ENCODE measurements at regions of chr3 and their contacts with region 1.

Region 1: DNA sequence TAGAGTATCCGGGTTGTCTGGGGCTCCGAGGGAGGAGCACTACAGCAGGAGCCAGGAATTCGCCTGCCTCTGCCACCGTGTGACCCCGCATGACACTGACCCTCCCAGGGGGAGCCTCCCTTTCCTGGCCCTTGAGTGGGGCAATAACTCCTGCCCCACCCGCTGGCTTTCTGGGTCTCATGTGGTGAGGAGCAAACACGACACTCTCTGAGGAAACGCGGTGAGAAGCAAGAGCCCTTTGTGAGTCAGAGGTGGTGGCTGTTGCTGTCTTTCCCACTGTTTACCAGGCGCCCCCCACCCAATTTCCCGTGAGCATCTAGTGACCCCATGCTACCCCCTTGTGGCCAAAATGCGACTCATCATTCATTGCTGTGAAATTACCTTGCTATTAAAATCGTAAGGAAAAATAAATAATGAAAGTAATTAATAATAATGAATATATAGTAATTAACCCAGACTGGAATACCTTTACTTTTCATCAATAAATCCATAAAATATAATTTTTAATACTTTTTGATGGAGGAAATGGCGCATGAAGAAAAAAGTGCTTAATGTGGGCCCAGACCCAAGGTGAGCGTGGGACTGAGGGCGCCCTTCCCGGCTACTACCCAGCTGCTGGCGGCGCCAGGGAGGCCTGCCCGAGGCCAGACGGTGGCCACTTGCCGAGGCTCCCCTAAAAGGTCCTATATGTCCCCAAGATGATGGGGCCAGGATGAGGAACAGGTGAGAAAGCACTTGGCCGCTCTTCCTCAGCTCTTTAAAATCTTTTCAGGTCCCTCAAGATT is 29.3 kb downstream of the CCNL1 start:
- DNase-seq: peak; percentile 78 to 82 (median 81)
- ATAC-seq: peak; percentile 30 to 75
- H3K4me3 ChIP-seq: no peak overlapping the region
- H3K27ac ChIP-seq: peak overlapping the region; percentile 74
- H3K4me1 ChIP-seq: peaks cover 36% of the 10 kb centered on the region
- H3K27me3 ChIP-seq: no peaks in the 10 kb centered on the region

Region 2: DNA sequence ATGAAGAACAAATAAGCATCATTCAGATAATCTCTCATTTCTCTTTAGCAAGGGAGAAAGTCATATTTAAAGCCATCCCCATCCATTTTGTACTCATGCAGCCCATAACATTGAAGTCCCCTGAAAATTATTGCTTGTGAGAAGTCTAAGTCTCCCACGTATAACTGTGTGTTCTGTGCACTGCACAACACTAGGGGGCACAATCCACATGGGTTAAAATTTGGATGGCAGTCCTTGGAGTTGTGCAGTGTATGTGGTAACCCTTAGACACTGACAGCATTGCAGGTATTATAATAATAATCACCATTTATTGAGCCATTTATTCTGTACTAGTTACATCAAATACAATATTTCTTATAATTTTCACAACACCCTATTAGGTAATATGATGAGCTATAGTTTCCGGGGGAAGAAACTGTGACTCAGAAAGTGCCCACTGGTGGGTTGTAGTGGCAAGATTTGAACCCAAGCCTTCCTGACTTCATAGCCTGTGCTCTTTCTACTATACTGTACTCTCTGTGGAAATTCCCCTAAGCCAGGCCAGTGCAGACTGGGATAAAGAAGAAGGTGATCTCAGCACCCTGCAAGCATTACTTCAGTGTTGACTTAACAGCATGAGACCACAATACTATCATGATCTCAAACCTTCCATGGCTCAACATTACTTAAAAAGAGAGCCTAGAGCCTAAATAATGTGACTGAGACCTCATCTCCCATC is 994.6 kb before region 1 on chr3:
- intact Hi-C with region 1: loop called in 1 of 4 experiments (anchors 5 kb)
- DNase-seq: no peak
- ATAC-seq: no peak
- H3K4me3 ChIP-seq: no peak overlapping the region
- H3K27ac ChIP-seq: no peak overlapping the region
- H3K4me1 ChIP-seq: no peaks in the 10 kb centered on the region
- H3K27me3 ChIP-seq: no peaks in the 10 kb centered on the region

Region 3: GRCh38 chr3:156547637-156548036 is 583.0 kb before region 1 on chr3:
- intact Hi-C with region 1: loop called in 2 of 4 experiments (anchors 5 to 10 kb)
- DNase-seq: no peak
- ATAC-seq: peak; percentile 43 to 51
- H3K4me3 ChIP-seq: peak overlapping the region; percentile 5
- H3K27ac ChIP-seq: no peak overlapping the region
- H3K4me1 ChIP-seq: peaks cover 9% of the 10 kb centered on the region
- H3K27me3 ChIP-seq: no peaks in the 10 kb centered on the region

Region 4: DNA sequence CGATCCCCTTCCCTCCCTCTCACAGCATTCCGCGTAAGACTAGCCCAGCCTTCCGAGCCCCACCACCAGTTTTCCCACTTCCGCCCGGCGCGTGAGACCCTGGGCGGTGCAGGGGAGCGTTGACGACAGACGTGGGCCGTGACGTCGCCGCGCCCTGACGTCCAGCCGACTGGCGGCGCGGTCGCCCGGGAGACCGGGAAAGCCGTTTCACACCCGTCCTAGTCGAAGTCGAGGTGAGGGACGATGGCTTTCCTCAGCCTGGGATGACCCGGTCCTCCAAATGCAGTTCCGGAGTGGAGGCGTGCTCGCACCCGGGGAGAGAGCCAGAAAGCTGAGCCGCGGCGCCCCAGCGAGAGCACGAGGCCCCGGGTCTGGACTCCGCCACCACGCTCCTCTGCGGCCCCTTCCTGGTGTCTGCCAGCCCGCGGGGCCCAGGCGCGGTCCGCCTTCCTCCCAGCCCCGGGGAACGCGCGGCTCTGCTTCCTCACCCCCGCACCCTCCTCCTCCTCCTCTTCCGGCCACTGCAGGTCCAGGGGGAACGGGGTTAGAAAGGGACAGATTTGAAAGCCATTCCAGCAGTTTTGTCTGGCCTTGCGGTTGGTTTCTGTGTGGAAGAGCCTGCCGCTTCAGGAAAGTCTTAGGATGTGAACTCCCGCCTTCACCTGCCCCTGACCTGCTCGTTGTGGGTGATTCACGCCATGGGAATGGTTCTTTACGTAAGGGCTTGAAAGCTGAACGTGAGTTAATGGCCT is 304.3 kb before region 1 on chr3 and contains the start of gene LEKR1:
- intact Hi-C with region 1: loop called in 2 of 4 experiments (anchors 10 kb)
- DNase-seq: peak; percentile 93 to 96 (median 95)
- ATAC-seq: peak; percentile 98 to 99
- H3K4me3 ChIP-seq: peak within 1 kb of the TSS; percentile 66
- H3K27ac ChIP-seq: peak within 1 kb of the TSS; percentile 88
- H3K4me1 ChIP-seq: no peaks in the 10 kb centered on the region
- H3K27me3 ChIP-seq: no peaks in the 10 kb centered on the region
- total RNA-seq, gene LEKR1: 0.97 to 2.0 (median 1.6) TPM

Region 5: DNA sequence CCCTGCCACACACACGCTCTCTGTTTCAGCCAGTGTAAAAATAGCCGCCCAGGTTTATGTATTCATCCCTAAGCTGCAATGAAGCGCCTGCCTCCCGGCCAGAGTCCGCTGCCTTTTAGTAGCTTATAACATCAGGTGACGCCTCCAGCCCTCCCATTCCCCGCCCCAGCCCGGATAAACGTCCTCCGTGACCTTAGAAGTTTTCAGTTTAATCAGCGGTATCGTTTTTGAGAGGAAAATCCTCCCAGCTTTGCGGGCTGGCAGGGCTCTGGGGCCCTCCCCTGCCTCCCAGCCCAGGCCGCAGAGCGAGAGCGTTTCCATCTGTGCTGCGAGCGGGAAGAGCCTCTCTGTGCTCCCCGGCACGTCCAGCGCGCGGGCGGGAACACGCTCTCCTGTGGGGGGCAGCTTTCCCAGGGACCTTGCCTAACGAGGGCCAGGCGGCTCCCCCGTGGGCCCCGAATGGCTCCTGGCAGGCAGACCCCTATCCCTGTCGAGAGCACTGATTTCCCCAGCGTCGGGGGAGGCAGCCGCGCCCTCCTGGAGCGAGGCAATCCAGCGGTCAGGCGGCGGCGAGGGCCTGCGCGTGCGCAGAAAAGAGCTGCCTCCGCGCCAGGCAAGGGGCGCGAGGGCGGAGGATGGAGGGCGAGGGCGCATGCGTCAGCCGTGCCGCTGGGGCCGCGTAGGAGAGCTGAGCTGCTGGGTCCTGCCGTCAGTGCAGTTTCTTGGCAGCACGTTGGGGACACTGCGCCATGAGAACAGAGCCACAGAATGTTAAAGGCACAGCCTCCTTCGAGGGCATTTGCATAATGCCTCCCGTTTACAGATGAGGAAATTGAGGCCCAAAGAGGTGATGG is 41.8 kb before region 1 on chr3:
- intact Hi-C with region 1: loop called (anchors 2 to 5 kb)
- DNase-seq: peak; percentile 97 to 99 (median 99)
- ATAC-seq: peak; percentile 91 to 92
- H3K4me3 ChIP-seq: peak overlapping the region; percentile 45
- H3K27ac ChIP-seq: peak overlapping the region; percentile 98
- H3K4me1 ChIP-seq: peaks cover 14% of the 10 kb centered on the region
- H3K27me3 ChIP-seq: no peaks in the 10 kb centered on the region